Right lobe of liver (tissue), 6 donors: ENCODE measurements at regions of chr9 and their contacts with region 1.

Region 1: DNA sequence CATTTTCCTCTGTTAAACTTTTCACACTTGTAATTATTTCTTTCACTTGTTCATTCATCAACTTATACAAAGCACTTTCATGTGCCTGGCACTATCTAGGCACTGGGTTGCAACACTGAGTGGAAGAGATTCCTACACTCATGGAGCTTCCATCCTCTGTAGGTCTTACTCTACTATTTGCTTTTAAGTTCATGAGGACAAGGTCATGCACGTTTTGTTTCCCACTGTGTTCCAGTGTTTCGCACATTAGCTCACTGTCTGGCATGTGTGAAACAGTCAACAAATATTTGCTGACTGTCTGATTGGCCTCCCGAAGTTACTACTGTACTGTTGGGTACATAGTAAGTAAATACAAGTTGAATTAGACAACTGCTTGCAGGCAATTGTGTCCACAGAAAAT is 87.9 kb upstream of the IFNK start:
- DNase-seq: peak in 1 of 3 donors; percentile 75
- ATAC-seq: peak; percentile 98 to 99 (median 98)
- H3K4me3 ChIP-seq: no peak overlapping the region
- H3K27ac ChIP-seq: no peak overlapping the region
- H3K4me1 ChIP-seq: peaks cover 0 to 7% (median 2%) of the 10 kb centered on the region in 4 donors
- H3K27me3 ChIP-seq: no peaks in the 10 kb centered on the region
- CTCF ChIP-seq: no peak
- POLR2A ChIP-seq: no peak

Region 2: DNA sequence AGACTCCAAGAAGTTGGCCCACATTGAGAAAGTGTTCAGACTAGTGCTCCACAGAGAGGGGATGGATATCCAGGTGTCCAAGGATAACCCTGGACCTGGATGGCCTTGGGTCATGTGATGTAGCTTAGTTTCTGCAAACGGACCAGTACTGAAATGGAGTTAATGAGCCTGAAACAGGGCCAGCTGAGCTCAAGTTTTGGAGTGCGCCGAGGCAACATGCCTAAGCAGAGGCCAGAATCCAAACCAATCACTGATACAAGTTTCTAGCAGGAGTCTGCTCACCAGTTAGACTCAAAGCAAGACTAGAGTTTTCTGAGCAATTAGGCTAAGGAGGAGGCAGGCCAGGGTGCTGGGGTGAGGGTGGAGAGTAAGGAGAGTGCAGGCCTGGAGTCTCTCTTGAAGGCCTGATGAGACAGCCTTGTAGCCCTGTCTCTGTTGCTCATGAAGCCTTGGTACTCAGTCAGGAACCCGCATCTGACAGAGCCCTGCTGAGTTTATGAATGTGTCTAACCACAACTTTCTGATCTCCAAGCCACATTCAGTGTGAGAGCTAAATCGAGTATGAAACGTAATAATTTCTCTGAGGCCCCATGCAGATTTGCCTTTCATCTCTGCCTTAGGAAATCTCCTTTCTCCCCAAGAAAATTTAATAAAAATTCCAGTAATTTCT is 70.4 kb before region 1 on chr9:
- intact Hi-C with region 1: no loop called
- DNase-seq: no peak
- ATAC-seq: no peak
- H3K4me3 ChIP-seq: no peak overlapping the region
- H3K27ac ChIP-seq: no peak overlapping the region
- H3K4me1 ChIP-seq: peaks cover 0 to 8% (median 0%) of the 10 kb centered on the region in 4 donors
- H3K27me3 ChIP-seq: no peaks in the 10 kb centered on the region
- CTCF ChIP-seq: no peak
- POLR2A ChIP-seq: no peak

Region 3: GRCh38 chr9:27379311-27380251 is 56.7 kb before region 1 on chr9:
- intact Hi-C with region 1: loop called in 1 of 2 experiments (anchors 10 kb)
- DNase-seq: peak in 2 of 3 donors; percentile 48 to 65
- ATAC-seq: peak; percentile 76 to 93 (median 80)
- H3K4me3 ChIP-seq: peak overlapping the region in 1 of 3 donors; percentile 15
- H3K27ac ChIP-seq: peak overlapping the region; percentile 31 to 65 (median 54)
- H3K4me1 ChIP-seq: peaks cover 0 to 30% (median 9%) of the 10 kb centered on the region in 4 donors
- H3K27me3 ChIP-seq: no peaks in the 10 kb centered on the region
- CTCF ChIP-seq: no peak
- POLR2A ChIP-seq: no peak

Region 4: GRCh38 chr9:27714388-27714787 is 278.2 kb after region 1 on chr9:
- intact Hi-C with region 1: no loop called
- DNase-seq: no peak
- ATAC-seq: no peak
- H3K4me3 ChIP-seq: no peak overlapping the region
- H3K27ac ChIP-seq: no peak overlapping the region
- H3K4me1 ChIP-seq: no peaks in the 10 kb centered on the region
- H3K27me3 ChIP-seq: no peaks in the 10 kb centered on the region
- CTCF ChIP-seq: no peak
- POLR2A ChIP-seq: no peak